PC-9 (cell line): ENCODE measurements at regions of chr19 and their contacts with region 1.

Region 1: GRCh38 chr19:8580710-8581281 is 3.6 kb upstream of the MYO1F start:
- DNase-seq: peak in 1 of 2 experiments; percentile 72
- H3K4me3 ChIP-seq: no peak overlapping the region
- H3K27ac ChIP-seq: no peak overlapping the region
- H3K4me1 ChIP-seq: peaks cover 19% of the 10 kb centered on the region
- H3K27me3 ChIP-seq: peaks cover 11% of the 10 kb centered on the region; the same call in 1 of the 2 replicates
- CTCF ChIP-seq: peak; percentile 100

Region 2: GRCh38 chr19:8269724-8270123 is 311.1 kb before region 1 on chr19:
- CTCF ChIA-PET with region 1: no interaction called
- POLR2A ChIA-PET with region 1: no interaction called
- intact Hi-C with region 1: loop called (anchors 5 kb)
- DNase-seq: peak in 1 of 2 experiments; percentile 32
- H3K4me3 ChIP-seq: no peak overlapping the region
- H3K27ac ChIP-seq: no peak overlapping the region
- H3K4me1 ChIP-seq: 0 out of 2 replicates have a peak, but pooled peaks cover 4% of the 10 kb centered on the region
- H3K27me3 ChIP-seq: no peaks in the 10 kb centered on the region
- CTCF ChIP-seq: no peak

Region 3: DNA sequence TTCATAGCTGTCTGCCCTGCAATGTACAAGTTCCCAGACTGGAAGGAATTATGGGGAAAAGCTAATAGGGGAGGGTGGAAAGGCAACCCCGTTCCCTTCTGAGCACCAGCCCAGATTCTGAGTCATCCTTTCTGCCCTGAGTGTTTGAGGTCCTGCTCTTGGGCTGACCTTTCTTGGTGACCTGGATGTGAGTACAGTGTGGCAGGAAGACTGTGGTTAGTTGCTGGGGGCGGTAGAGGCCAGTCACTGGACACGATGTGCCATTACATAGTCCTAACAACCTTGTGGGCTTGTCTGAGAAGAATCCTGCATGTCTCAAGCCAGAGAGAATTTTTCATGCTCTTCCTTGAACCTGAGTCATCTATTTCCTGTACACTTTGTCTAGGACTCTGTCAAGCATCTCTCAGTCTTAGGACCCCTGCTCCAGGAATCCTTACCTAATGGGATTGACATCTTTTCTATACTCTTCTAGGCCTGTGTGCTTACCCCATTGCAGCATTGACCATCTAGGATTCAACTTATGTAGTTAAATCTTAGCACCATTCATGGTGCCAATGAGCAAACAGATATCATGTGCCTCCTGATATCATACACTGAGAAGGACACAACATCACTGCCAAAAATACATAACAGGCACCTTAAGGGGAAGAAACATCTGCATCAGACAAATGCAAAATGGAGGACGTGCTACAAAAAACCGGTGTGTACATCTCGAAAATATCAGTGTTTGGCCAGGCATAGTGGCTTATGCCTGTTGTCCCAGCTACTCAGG is 225.0 kb before region 1 on chr19:
- CTCF ChIA-PET with region 1: interaction called, 8 read pairs
- POLR2A ChIA-PET with region 1: interaction called, 8 read pairs
- intact Hi-C with region 1: loop called (anchors 1 kb)
- DNase-seq: peak; percentile 70 to 98
- H3K4me3 ChIP-seq: no peak overlapping the region
- H3K27ac ChIP-seq: peak overlapping the region; percentile 59
- H3K4me1 ChIP-seq: peaks cover 48% of the 10 kb centered on the region
- H3K27me3 ChIP-seq: no peaks in the 10 kb centered on the region
- CTCF ChIP-seq: 0 out of 2 replicates have a peak, but pooled peaks have one; percentile 14

Region 4: DNA sequence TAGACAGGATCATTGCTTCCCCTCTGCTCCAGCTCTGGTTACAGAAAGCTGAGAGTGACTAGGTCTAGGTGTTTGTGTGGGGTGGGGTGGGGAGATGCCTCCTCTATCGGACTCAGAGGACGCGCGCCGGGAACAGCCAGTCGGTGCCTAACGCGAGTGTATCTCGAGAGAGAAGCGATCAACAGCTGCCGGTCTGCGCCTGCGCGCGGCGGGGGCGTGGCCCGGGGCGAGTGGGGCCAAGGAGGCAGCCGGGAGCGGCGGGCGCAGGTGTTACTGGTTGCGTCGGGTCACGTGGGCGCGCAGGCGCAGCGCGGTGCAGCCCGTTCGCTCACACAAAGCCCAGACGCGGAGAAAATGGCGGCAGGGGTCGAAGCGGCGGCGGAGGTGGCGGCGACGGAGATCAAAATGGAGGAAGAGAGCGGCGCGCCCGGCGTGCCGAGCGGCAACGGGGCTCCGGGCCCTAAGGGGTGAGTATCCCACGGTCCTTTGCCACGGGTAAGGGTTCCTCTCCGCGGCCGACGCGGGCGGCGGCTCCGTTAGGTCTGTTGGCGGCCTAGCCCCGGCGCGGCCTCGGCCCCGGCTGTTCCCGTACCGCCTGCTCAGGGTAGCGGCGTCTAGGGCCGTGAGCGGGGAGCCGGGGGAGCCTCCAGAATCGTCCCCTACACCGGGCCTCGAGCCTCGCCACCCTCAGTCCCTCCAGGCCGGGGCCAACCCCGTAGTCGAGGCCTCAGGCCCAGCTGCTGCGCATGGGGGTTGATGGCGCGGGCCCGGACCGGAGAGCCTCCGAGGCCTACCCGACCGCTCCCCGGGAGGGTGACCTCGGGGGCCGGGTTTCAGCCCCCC is 135.9 kb before region 1 on chr19 and contains the start of gene HNRNPM:
- CTCF ChIA-PET with region 1: no interaction called
- POLR2A ChIA-PET with region 1: no interaction called
- intact Hi-C with region 1: no loop called
- DNase-seq: peak; percentile 95 to 100
- H3K4me3 ChIP-seq: peak within 1 kb of the TSS; percentile 98
- H3K27ac ChIP-seq: peak within 1 kb of the TSS; percentile 76
- H3K4me1 ChIP-seq: peaks cover 38% of the 10 kb centered on the region
- H3K27me3 ChIP-seq: no peaks in the 10 kb centered on the region
- CTCF ChIP-seq: no peak
- total RNA-seq, gene HNRNPM: 220 and 239 TPM in 2 replicates

Region 5: DNA sequence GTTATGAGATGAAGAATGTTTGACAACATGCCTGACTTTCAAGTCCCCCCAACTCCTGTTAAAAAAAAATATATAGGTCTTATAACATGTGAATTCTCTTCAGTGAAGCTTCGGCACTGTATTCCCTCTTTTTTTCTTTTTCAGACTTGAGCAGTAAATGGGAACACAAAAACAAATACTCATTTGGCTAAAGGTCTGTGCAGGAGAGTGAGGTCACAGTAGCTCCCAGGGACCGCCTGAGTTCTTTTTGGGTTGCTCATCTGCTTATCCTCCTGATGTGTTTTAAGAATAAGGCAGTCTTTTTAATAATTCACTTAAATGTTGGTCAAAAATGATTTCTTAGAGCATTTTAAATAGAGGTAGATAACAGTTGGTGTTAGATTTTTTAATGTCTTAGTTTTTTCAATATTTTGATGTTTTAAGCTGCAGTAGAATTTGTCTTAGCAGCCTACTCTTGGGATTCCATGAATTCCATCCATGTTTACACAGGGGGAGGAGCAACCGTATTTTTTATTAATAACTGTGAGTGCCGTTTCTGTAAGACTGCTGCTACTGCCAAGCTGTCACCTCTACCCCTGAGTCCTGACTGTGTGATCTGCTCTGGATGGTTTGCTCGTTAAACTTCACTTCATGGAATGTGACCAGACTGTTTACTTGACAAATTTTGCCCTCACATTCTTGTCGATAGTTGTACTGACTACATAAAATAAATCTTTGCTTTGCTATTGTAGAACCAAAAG is 121.1 kb before region 1 on chr19:
- CTCF ChIA-PET with region 1: interaction called, 10 read pairs
- POLR2A ChIA-PET with region 1: no interaction called
- intact Hi-C with region 1: no loop called
- DNase-seq: peak; percentile 27 to 88
- H3K4me3 ChIP-seq: no peak overlapping the region
- H3K27ac ChIP-seq: peak overlapping the region; percentile 43
- H3K4me1 ChIP-seq: peaks cover 35% of the 10 kb centered on the region
- H3K27me3 ChIP-seq: no peaks in the 10 kb centered on the region
- CTCF ChIP-seq: no peak

Region 6: GRCh38 chr19:8513687-8514504 is 66.9 kb before region 1 on chr19 and contains the start of gene ZNF414:
- CTCF ChIA-PET with region 1: interaction called, 10 read pairs
- POLR2A ChIA-PET with region 1: interaction called, 4 read pairs
- intact Hi-C with region 1: no loop called
- DNase-seq: peak; percentile 93 to 95
- H3K4me3 ChIP-seq: peak within 1 kb of the TSS; percentile 80
- H3K27ac ChIP-seq: peak within 1 kb of the TSS; percentile 76
- H3K4me1 ChIP-seq: peaks cover 14% of the 10 kb centered on the region
- H3K27me3 ChIP-seq: no peaks in the 10 kb centered on the region
- CTCF ChIP-seq: no peak
- total RNA-seq, gene ZNF414: 22.1 and 22.4 TPM in 2 replicates

Region 7: DNA sequence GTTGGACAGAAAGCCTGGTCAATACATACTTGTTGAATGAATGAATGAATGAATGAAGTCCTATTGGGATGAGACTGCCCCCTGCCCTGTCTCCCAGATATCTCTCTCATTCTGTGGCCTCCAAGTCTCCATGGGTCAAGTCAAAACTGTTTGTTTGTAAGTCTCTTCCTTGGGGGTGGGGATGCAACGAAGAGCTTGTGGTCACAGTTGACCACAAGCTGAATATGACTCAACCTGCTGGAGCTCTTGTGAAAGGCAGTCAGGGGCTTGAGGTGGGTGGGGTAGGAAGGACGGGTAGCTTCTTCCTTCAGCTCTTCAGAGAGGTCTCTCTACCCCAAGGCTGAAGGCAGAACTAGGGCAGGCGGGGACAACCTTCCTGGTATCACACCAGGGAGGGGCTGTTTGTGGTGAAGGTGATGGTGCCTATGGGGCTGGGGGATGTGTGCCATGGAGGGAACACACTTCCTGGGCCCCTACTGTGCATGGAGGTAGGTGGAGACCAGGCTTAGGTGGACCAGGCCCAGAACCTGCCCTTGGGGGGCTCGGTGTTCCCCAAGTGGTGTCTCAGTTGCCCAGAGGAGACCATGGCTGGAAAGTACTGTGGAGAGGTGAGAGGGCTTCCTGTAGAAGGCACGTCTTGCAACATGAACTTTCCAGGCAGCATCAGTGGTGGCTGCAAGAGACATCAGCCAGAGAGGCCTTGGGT is 11.6 kb before region 1 on chr19:
- CTCF ChIA-PET with region 1: interaction called, 6 read pairs
- POLR2A ChIA-PET with region 1: no interaction called
- intact Hi-C with region 1: loop called (anchors 1 kb)
- DNase-seq: peak; percentile 63 to 95
- H3K4me3 ChIP-seq: no peak overlapping the region
- H3K27ac ChIP-seq: 0 out of 2 replicates have a peak overlapping the region, but pooled peaks have one; percentile 18
- H3K4me1 ChIP-seq: peaks cover 46% of the 10 kb centered on the region
- H3K27me3 ChIP-seq: no peaks in the 10 kb centered on the region
- CTCF ChIP-seq: no peak; the same call in 1 of the 2 replicates

Region 8: GRCh38 chr19:8690753-8691539 is 110.2 kb after region 1 on chr19:
- CTCF ChIA-PET with region 1: interaction called, 3 read pairs
- POLR2A ChIA-PET with region 1: no interaction called
- intact Hi-C with region 1: loop called (anchors 5 kb)
- DNase-seq: no peak
- H3K4me3 ChIP-seq: no peak overlapping the region
- H3K27ac ChIP-seq: no peak overlapping the region
- H3K4me1 ChIP-seq: no peaks in the 10 kb centered on the region
- H3K27me3 ChIP-seq: peaks cover 58% of the 10 kb centered on the region; the same call in 1 of the 2 replicates
- CTCF ChIP-seq: no peak